ENCODE measurements at regions of chr3 and their contacts with region 1.

Region 1: GRCh38 chr3:178671791-178672190 is 135.6 kb downstream of the KCNMB2 start:
- DNase-seq: peak; percentile 84
- H3K4me3 ChIP-seq: no peak overlapping the region
- H3K27ac ChIP-seq: peak overlapping the region; percentile 24
- H3K4me1 ChIP-seq: peaks cover 13% of the 10 kb centered on the region
- H3K27me3 ChIP-seq: no peaks in the 10 kb centered on the region
- CTCF ChIP-seq: no peak

Region 2: GRCh38 chr3:178705925-178706324 is 34.1 kb after region 1 on chr3:
- CTCF ChIA-PET with region 1: no interaction called
- dilution Hi-C with region 1: no loop called
- in situ Hi-C with region 1: no loop called
- intact Hi-C with region 1: loop called (anchors 5 kb)
- DNase-seq: peak; percentile 94
- H3K4me3 ChIP-seq: no peak overlapping the region
- H3K27ac ChIP-seq: peak overlapping the region; percentile 43
- H3K4me1 ChIP-seq: peaks cover 33% of the 10 kb centered on the region
- H3K27me3 ChIP-seq: no peaks in the 10 kb centered on the region
- CTCF ChIP-seq: no peak